ENCODE measurements at regions of chr12 and their contacts with region 1.

Region 1: DNA sequence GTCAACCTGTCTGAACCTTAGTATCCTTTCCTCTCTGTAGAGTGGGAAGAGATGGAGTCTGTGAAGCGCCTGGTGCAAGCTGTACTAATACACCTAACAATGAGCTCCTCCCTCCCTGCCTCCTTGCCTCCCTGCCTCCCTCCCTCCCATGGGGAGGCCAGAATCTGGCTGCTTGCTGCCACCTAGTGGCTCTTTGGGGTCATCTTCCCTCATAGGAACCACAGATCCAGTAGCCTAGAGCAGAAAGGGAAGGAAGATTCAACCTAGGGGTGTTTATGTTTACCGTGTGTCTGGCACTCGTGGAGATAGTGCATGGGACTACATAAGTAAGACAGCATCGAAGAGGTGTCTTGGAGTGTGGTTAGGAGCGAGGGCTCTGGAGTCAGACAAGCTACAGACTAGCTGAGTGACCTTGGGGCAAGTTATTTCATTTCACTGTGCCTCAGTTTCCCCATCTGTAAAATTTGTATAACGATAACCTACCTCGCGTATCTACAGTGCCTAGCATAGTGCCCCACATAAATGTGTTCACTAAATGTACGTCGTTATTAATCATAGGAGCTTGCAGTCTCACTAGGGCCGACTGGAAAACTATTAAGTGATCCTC is 35.5 kb upstream of the TSPAN9 start:
- DNase-seq: peak; percentile 75
- ATAC-seq: peak; percentile 98
- H3K4me3 Mint-ChIP-seq: no peak overlapping the region
- H3K27ac Mint-ChIP-seq: no peak overlapping the region
- H3K4me1 Mint-ChIP-seq: no peaks in the 10 kb centered on the region
- H3K27me3 Mint-ChIP-seq: peaks cover 14% of the 10 kb centered on the region
- CTCF ChIP-seq: peak; percentile 60

Region 2: GRCh38 chr12:2853626-2854025 is 188.0 kb before region 1 on chr12:
- CTCF ChIA-PET with region 1: interaction called, 8 read pairs
- POLR2A ChIA-PET with region 1: no interaction called
- intact Hi-C with region 1: loop called (anchors 10 kb)
- DNase-seq: peak; percentile 65
- ATAC-seq: peak; percentile 78
- H3K4me3 Mint-ChIP-seq: no peak overlapping the region
- H3K27ac Mint-ChIP-seq: no peak overlapping the region
- H3K4me1 Mint-ChIP-seq: no peaks in the 10 kb centered on the region
- H3K27me3 Mint-ChIP-seq: no peaks in the 10 kb centered on the region
- CTCF ChIP-seq: peak; percentile 67

Region 3: GRCh38 chr12:2998789-2999264 is 42.8 kb before region 1 on chr12:
- CTCF ChIA-PET with region 1: no interaction called
- POLR2A ChIA-PET with region 1: no interaction called
- intact Hi-C with region 1: no loop called
- DNase-seq: no peak
- ATAC-seq: no peak
- H3K4me3 Mint-ChIP-seq: no peak overlapping the region
- H3K27ac Mint-ChIP-seq: no peak overlapping the region
- H3K4me1 Mint-ChIP-seq: no peaks in the 10 kb centered on the region
- H3K27me3 Mint-ChIP-seq: no peaks in the 10 kb centered on the region
- CTCF ChIP-seq: no peak